ENCODE measurements at regions of chr13 and their contacts with region 1.

Region 1: GRCh38 chr13:30165796-30166195 is 141.6 kb downstream of the KATNAL1 start:
- DNase-seq: no peak
- ATAC-seq: no peak
- H3K4me3 ChIP-seq: no peak overlapping the region
- H3K4me3 Mint-ChIP-seq: no peak overlapping the region
- H3K27ac ChIP-seq: no peak overlapping the region
- H3K27ac Mint-ChIP-seq: no peak overlapping the region
- H3K4me1 ChIP-seq: peaks cover 1 to 9% of the 10 kb centered on the region in 2 experiments
- H3K4me1 Mint-ChIP-seq: peaks cover 14 to 29% (median 15%) of the 10 kb centered on the region in 3 donors
- H3K27me3 ChIP-seq: no peaks in the 10 kb centered on the region
- H3K27me3 Mint-ChIP-seq: no peaks in the 10 kb centered on the region

Region 2: GRCh38 chr13:29758531-29759114 is 407.2 kb before region 1 on chr13:
- CTCF ChIA-PET with region 1: no interaction called
- POLR2A ChIA-PET with region 1: interaction called in 1 of 2 experiments, 15 read pairs
- DNase-seq: peak in 34 of 35 experiments; percentile 1 to 65 (median 35)
- ATAC-seq: peak; percentile 49 to 81 (median 60)
- H3K4me3 ChIP-seq: no peak overlapping the region
- H3K4me3 Mint-ChIP-seq: peak overlapping the region in 1 of 3 donors; percentile 24
- H3K27ac ChIP-seq: no peak overlapping the region
- H3K27ac Mint-ChIP-seq: peak overlapping the region in 1 of 2 donors; percentile 56
- H3K4me1 ChIP-seq: peaks cover 5 to 9% of the 10 kb centered on the region in 2 experiments
- H3K4me1 Mint-ChIP-seq: peaks cover 22 to 27% (median 22%) of the 10 kb centered on the region in 3 donors
- H3K27me3 ChIP-seq: no peaks in the 10 kb centered on the region
- H3K27me3 Mint-ChIP-seq: no peaks in the 10 kb centered on the region

Region 3: GRCh38 chr13:30091691-30092090 is 74.1 kb before region 1 on chr13:
- CTCF ChIA-PET with region 1: no interaction called
- POLR2A ChIA-PET with region 1: no interaction called
- DNase-seq: no peak
- ATAC-seq: no peak
- H3K4me3 ChIP-seq: no peak overlapping the region
- H3K4me3 Mint-ChIP-seq: no peak overlapping the region
- H3K27ac ChIP-seq: no peak overlapping the region
- H3K27ac Mint-ChIP-seq: no peak overlapping the region
- H3K4me1 ChIP-seq: no peaks in the 10 kb centered on the region
- H3K4me1 Mint-ChIP-seq: peaks cover 0 to 6% (median 0%) of the 10 kb centered on the region in 3 donors
- H3K27me3 ChIP-seq: no peaks in the 10 kb centered on the region
- H3K27me3 Mint-ChIP-seq: peaks cover 0 to 3% of the 10 kb centered on the region in 2 donors

Region 4: DNA sequence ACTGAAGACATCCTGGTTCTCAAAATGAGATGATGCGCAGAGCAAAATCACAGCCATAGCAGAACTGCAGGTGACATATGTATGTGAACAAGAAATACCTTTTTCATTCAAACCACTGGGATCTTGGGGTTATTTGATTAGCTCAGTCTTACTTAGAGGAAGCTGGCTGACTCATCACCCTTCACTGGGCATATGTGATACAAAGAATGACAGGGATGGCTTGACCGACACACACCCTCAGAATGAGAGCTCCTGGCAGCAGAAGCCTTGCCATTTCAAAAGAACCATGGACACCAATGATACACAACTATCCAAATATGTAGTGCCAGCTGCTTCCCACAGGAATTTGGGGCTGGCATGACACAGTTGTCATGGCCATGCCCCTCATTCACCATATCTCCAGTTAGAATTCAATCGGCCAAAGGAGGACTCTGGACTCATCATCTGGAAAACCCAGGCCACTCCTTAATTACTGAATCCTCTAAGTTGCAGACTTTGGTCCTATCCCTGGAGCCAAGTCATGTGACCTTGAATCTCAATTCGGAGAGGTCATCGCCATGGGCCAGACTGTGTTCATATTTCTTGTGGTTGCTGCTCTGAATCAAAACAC is 25.8 kb after region 1 on chr13:
- CTCF ChIA-PET with region 1: no interaction called
- POLR2A ChIA-PET with region 1: no interaction called
- DNase-seq: no peak
- ATAC-seq: no peak
- H3K4me3 ChIP-seq: no peak overlapping the region
- H3K4me3 Mint-ChIP-seq: no peak overlapping the region
- H3K27ac ChIP-seq: no peak overlapping the region
- H3K27ac Mint-ChIP-seq: no peak overlapping the region
- H3K4me1 ChIP-seq: no peaks in the 10 kb centered on the region
- H3K4me1 Mint-ChIP-seq: peaks cover 0 to 9% (median 3%) of the 10 kb centered on the region in 3 donors
- H3K27me3 ChIP-seq: no peaks in the 10 kb centered on the region
- H3K27me3 Mint-ChIP-seq: no peaks in the 10 kb centered on the region